ENCODE measurements at regions of chr3 and their contacts with region 1.

Region 1: GRCh38 chr3:13332158-13332557 is 88.0 kb downstream of the NUP210 start:
- DNase-seq: peak; percentile 93
- ATAC-seq: peak; percentile 93
- H3K4me3 ChIP-seq: peak overlapping the region; percentile 43; the same call in 1 of the 2 replicates
- H3K27ac ChIP-seq: peak overlapping the region; percentile 88
- H3K4me1 ChIP-seq: peaks cover 38% of the 10 kb centered on the region
- H3K27me3 ChIP-seq: no peaks in the 10 kb centered on the region
- CTCF ChIP-seq: no peak
- EP300 ChIP-seq: peak; percentile 58 to 93
- POLR2A ChIP-seq: peak; percentile 54
- RAD21 ChIP-seq: no peak

Region 2: GRCh38 chr3:13288732-13289718 is 43.1 kb before region 1 on chr3:
- CTCF ChIA-PET with region 1: no interaction called
- POLR2A ChIA-PET with region 1: no interaction called
- RAD21 ChIA-PET with region 1: no interaction called
- SMC1A ChIA-PET with region 1: no interaction called
- in situ Hi-C with region 1: no loop called
- intact Hi-C with region 1: no loop called
- DNase-seq: no peak
- ATAC-seq: no peak
- H3K4me3 ChIP-seq: no peak overlapping the region
- H3K27ac ChIP-seq: no peak overlapping the region
- H3K4me1 ChIP-seq: no peaks in the 10 kb centered on the region
- H3K27me3 ChIP-seq: peaks cover 1 to 2% of the 10 kb centered on the region in 2 experiments; a peak in 2 of 4 replicates
- CTCF ChIP-seq: no peak
- EP300 ChIP-seq: no peak
- POLR2A ChIP-seq: no peak
- RAD21 ChIP-seq: no peak

Region 3: DNA sequence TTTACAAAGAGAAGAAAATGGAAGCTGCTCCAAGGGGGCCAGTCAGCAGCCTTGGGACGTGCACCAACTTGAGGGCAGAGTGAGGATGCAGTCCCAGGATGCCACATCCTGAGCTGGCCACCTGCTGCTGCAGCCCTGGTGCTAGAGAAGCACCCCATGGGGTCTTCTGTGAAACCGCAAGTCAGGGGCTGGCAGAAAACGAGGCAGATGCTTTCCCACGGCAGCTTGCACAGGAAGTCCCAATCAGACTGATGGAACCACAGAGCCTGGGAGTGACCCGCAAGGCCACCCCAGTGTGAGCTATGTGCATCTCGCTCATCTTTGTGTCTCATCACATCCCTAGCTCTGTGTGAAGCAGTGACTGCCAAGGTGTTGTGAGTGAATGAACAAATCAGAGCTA is 11.4 kb after region 1 on chr3:
- CTCF ChIA-PET with region 1: no interaction called
- POLR2A ChIA-PET with region 1: interaction called, 3 read pairs
- RAD21 ChIA-PET with region 1: interaction called, 6 read pairs
- SMC1A ChIA-PET with region 1: interaction called, 11 read pairs
- in situ Hi-C with region 1: no loop called
- intact Hi-C with region 1: no loop called
- DNase-seq: no peak
- ATAC-seq: no peak
- H3K4me3 ChIP-seq: no peak overlapping the region
- H3K27ac ChIP-seq: no peak overlapping the region
- H3K4me1 ChIP-seq: 0 out of 2 replicates have a peak, but pooled peaks cover 4% of the 10 kb centered on the region
- H3K27me3 ChIP-seq: no peaks in the 10 kb centered on the region
- CTCF ChIP-seq: no peak
- EP300 ChIP-seq: no peak
- POLR2A ChIP-seq: 0 out of 2 replicates have a peak, but pooled peaks have one; percentile 0
- RAD21 ChIP-seq: no peak

Measured in GM12878 (cell line).